ENCODE measurements at regions of chr21 and their contacts with region 1.

Region 1: GRCh38 chr21:16323596-16323995 is 593.8 kb downstream of the USP25 start:
- DNase-seq: no peak
- ATAC-seq: no peak
- H3K4me3 ChIP-seq: no peak overlapping the region
- H3K27ac ChIP-seq: no peak overlapping the region
- H3K4me1 ChIP-seq: no peaks in the 10 kb centered on the region
- H3K27me3 ChIP-seq: peaks cover 35% of the 10 kb centered on the region
- CTCF ChIP-seq: no peak

Region 2: DNA sequence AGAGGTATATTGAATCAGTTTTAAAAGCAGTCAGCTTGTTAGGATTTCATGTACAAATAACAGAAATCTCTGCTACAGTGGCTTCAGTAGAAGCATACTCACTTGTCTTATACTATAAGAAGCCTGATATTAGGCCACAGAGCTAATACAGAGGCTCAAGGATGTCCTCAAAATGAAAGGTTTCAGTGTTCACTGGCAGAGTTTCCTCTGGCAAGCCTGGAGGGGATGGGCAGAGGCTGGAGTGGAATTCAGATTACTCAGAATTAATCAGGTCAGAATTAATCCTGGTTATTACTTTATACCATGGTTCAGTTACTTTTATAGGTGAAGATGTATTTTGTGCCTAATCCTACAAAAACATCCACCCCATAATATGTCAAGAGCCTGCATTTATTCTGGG is 73.3 kb before region 1 on chr21:
- CTCF ChIA-PET with region 1: no interaction called
- POLR2A ChIA-PET with region 1: no interaction called
- intact Hi-C with region 1: loop called (anchors 5 kb)
- DNase-seq: peak; percentile 10
- ATAC-seq: peak; percentile 60; the same call in 1 of the 2 replicates
- H3K4me3 ChIP-seq: no peak overlapping the region
- H3K27ac ChIP-seq: no peak overlapping the region
- H3K4me1 ChIP-seq: no peaks in the 10 kb centered on the region
- H3K27me3 ChIP-seq: peaks cover 7% of the 10 kb centered on the region; the same call in 1 of the 2 replicates
- CTCF ChIP-seq: no peak